ENCODE measurements at regions of chr5 and their contacts with region 1.

Region 1: DNA sequence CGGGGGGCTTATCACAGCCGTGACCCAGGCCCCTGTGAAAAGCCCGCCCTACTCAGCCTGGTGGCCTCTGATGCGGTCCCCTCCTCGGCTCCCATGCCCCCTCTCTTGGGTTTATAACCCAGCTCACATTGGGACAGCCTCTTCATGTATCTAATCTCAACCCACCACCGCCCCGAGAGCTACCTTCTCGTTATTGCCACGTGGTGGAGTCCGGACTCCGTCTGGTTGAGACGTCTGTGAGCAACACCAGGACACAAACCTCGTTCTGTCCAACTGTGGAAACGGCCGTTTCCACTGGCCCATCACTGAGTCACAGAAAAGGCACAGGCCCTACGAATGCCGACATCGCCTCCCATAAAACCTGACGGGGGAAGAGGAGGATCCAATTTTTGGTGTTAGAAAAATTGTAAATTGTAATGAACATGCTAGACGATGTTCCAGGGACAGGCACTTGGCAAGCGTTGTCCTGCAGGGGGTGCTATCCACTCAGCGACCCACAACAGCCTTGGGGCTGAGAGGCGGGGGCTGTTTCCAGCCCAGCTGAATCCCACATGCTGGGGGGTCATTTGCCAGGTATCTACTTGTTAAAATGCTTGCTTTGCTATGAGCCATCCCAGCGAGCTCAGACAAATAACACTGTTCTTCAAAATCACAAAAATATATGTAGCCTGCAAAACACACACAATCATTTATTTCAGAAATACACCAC is 37.3 kb upstream of the N4BP3 start:
- DNase-seq: peak; percentile 84
- H3K4me3 Mint-ChIP-seq: peak overlapping the region; percentile 10
- H3K27ac Mint-ChIP-seq: no peak overlapping the region
- H3K4me1 Mint-ChIP-seq: peaks cover 36% of the 10 kb centered on the region
- H3K27me3 Mint-ChIP-seq: peaks cover 34% of the 10 kb centered on the region
- CTCF ChIP-seq: peak; percentile 99

Region 2: GRCh38 chr5:178104492-178104891 is 28.5 kb after region 1 on chr5:
- CTCF ChIA-PET with region 1: interaction called, 55 read pairs
- POLR2A ChIA-PET with region 1: interaction called, 4 read pairs
- intact Hi-C with region 1: no loop called
- DNase-seq: peak; percentile 46
- H3K4me3 Mint-ChIP-seq: no peak overlapping the region
- H3K27ac Mint-ChIP-seq: peak overlapping the region; percentile 61
- H3K4me1 Mint-ChIP-seq: peaks cover 27% of the 10 kb centered on the region
- H3K27me3 Mint-ChIP-seq: no peaks in the 10 kb centered on the region
- CTCF ChIP-seq: no peak

Region 3: DNA sequence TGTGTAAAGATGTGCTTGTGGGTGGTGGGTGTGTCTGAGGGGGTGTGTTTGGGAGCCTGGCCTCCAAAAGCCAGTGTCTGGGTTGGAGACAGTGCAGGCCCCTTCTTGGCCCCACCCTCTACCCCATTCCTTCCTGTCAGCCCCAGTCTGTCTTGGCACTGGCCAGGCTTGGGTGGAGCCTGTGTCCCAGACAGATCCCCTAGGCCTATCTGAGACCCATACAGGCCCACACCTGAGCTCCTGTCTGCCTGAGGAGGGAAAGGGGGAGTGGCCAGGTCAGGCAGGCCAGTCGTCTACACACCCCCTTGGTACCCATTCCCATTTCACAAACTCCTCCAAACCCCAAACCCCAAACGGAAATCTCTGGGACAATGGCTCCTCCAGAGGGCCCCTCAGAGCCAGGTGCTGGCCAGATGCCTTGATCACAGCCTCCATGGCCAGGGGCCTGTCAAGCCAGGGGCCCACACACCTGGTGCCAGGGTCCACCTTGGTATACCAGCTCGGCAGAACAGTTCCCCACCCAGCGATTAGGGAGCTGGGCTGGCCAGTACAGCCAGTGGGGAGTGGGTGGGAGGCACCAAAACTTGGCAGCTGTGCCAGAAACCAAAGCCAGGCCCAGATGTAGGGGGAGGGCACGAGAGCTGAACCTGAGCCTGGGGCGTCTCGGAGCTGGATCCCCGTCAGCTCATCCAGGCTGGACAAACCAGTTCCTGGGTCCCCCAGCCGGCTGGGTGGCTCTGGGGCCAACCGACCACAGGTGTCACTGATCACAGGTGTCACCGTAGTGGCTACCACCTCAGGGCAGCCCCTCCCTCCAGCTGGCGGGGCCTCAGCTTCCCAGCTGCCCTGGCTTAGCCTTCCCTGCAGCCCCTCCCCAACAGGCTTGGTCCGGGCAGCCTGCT is 47.9 kb after region 1 on chr5:
- CTCF ChIA-PET with region 1: interaction called, 11 read pairs
- POLR2A ChIA-PET with region 1: no interaction called
- intact Hi-C with region 1: no loop called
- DNase-seq: peak; percentile 37
- H3K4me3 Mint-ChIP-seq: no peak overlapping the region
- H3K27ac Mint-ChIP-seq: no peak overlapping the region
- H3K4me1 Mint-ChIP-seq: no peaks in the 10 kb centered on the region
- H3K27me3 Mint-ChIP-seq: no peaks in the 10 kb centered on the region
- CTCF ChIP-seq: no peak

Region 4: DNA sequence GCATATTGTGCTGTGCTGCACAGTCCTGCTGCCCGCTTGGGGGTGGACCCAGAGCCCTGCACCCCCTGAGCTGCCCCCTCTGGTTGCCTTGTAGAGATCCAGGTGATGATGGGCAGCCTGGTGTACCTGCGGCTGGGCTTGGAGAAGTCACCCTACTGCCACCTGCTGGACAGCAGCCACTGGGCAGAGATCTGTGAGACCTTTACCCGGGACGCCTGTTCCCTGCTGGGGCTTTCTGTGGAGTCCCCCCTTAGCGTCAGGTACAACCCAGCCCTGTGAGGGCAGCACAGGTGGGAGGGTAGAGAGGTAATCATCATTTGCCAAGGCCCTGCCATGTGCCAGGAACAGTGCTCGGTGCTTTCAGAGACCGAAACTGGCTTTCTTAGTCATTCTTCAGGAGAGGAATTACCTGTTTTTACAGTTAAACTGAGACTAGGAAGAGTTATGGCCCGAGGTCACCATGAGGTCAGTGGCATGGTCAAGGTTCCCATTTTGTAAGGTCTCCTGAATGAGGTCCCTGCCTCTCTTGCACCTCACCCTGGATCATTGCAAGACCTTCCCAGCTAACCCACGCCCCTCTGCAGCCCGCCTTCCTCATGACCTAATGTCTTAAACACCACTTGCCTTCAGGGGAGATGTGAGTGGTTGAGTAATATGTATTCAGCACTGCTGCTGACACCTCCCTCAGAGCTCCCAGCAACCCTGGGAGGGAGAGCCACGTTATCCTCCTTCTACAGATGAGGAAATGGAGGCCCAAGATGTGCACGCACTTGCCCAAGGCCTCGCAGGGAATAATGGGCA is 70.2 kb after region 1 on chr5:
- CTCF ChIA-PET with region 1: interaction called, 286 read pairs
- POLR2A ChIA-PET with region 1: interaction called, 123 read pairs
- intact Hi-C with region 1: loop called (anchors 1 kb)
- DNase-seq: peak; percentile 85
- H3K4me3 Mint-ChIP-seq: no peak overlapping the region
- H3K27ac Mint-ChIP-seq: peak overlapping the region; percentile 37
- H3K4me1 Mint-ChIP-seq: peaks cover 24% of the 10 kb centered on the region
- H3K27me3 Mint-ChIP-seq: no peaks in the 10 kb centered on the region
- CTCF ChIP-seq: peak; percentile 93

Region 5: GRCh38 chr5:178163772-178164735 is 88.1 kb after region 1 on chr5:
- CTCF ChIA-PET with region 1: interaction called, 81 read pairs
- POLR2A ChIA-PET with region 1: interaction called, 4 read pairs
- intact Hi-C with region 1: loop called (anchors 1 kb)
- DNase-seq: peak; percentile 88
- H3K4me3 Mint-ChIP-seq: peak overlapping the region; percentile 8
- H3K27ac Mint-ChIP-seq: no peak overlapping the region
- H3K4me1 Mint-ChIP-seq: no peaks in the 10 kb centered on the region
- H3K27me3 Mint-ChIP-seq: peaks cover 33% of the 10 kb centered on the region
- CTCF ChIP-seq: peak; percentile 100

Region 6: DNA sequence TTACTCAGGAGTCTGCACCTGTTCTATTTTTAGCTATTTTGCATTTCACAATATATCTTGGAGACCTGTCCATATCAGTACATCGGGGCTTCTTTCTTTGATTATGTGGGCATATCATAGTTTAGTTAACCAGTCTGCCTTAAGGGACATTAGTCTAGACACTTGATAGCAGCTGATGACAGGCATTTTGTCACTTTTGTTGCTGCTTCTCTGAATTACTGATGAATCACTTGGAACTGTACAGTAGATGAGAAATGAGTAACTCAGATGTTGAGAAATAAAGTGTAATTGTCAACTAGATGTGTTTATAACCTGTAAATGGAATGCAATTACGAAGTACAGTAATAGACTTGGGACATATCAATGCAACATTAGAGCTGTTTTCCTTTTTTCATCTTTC is 826.8 kb after region 1 on chr5:
- CTCF ChIA-PET with region 1: no interaction called
- POLR2A ChIA-PET with region 1: no interaction called
- intact Hi-C with region 1: no loop called
- DNase-seq: peak; percentile 42
- H3K4me3 Mint-ChIP-seq: no peak overlapping the region
- H3K27ac Mint-ChIP-seq: no peak overlapping the region
- H3K4me1 Mint-ChIP-seq: peaks cover 5% of the 10 kb centered on the region
- H3K27me3 Mint-ChIP-seq: no peaks in the 10 kb centered on the region
- CTCF ChIP-seq: no peak

Measured in MCF 10A (cell line).